ENCODE measurements at regions of chrX and their contacts with region 1.

Region 1: GRCh38 chrX:68433155-68433980 is at the start of gene OPHN1:
- DNase-seq: peak; percentile 30 to 80 (median 76)
- H3K4me3 ChIP-seq: peak within 1 kb of the TSS; percentile 48 to 81 (median 66)
- H3K27ac ChIP-seq: peak within 1 kb of the TSS in 55 of 59 donors; percentile 22 to 89 (median 73)
- H3K27me3 ChIP-seq: peaks cover 0 to 72% (median 17%) of the 10 kb centered on the region in 45 donors
- CTCF ChIP-seq: no peak
- total RNA-seq, gene OPHN1: 19.7 to 56.9 (median 31.7) TPM

Region 2: GRCh38 chrX:68252664-68253063 is 180.7 kb before region 1 on chrX:
- intact Hi-C with region 1: loop called in 1 of 2 experiments (anchors 10 kb)
- DNase-seq: no peak
- H3K4me3 ChIP-seq: no peak overlapping the region
- H3K27ac ChIP-seq: no peak overlapping the region
- H3K27me3 ChIP-seq: peaks cover 0 to 55% (median 4%) of the 10 kb centered on the region in 45 donors
- CTCF ChIP-seq: no peak

Region 3: DNA sequence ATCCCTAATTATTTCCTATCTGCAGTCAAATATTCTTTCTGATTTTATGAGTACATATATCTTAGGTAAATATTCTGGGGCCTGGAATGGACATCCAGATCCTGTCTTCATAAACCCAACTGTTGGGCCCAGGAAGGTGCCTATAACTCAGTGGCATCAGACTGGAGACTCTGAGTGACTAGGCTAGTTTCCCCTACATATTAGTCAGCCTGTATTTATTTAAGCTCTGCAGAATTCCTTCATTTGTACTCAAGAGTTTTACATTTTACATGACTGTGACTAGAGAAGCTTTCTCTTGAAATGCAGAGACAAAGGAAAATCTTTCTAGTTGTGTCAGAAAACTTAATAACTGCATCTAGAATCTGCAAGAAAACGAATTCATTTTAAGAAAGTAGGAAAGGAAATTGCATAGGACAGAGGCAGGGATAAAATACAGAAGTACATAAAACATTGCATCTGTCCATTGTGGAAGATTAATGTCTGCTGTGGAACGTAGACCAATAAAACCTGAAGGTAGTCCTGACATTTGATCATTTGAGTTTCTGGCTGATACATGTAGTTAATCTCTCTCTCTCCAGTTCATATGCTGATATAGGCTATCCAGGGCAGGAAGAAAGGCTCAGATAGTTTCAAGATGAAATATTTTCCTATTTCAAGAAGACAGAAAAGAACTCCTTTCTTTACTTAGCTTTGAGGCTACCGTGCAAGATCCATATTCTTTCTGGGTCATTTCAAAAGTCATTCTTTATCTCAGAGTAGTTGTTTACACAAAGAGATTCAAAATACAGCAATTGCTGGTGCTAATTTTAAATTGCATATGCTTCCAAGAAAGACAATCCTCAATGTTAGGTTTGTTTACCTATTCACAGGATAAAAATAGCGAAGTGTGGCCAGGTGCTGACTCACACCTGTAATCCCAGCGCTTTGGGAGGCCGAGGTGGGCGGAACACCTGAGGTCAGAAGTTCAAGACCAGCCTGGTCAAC is 78.2 kb before region 1 on chrX:
- intact Hi-C with region 1: no loop called
- DNase-seq: no peak
- H3K4me3 ChIP-seq: no peak overlapping the region
- H3K27ac ChIP-seq: no peak overlapping the region
- H3K27me3 ChIP-seq: peaks cover 0 to 37% (median 0%) of the 10 kb centered on the region in 45 donors
- CTCF ChIP-seq: no peak